Stomach (tissue), 19 donors: ENCODE measurements at regions of chr4 and their contacts with region 1.

Region 1: DNA sequence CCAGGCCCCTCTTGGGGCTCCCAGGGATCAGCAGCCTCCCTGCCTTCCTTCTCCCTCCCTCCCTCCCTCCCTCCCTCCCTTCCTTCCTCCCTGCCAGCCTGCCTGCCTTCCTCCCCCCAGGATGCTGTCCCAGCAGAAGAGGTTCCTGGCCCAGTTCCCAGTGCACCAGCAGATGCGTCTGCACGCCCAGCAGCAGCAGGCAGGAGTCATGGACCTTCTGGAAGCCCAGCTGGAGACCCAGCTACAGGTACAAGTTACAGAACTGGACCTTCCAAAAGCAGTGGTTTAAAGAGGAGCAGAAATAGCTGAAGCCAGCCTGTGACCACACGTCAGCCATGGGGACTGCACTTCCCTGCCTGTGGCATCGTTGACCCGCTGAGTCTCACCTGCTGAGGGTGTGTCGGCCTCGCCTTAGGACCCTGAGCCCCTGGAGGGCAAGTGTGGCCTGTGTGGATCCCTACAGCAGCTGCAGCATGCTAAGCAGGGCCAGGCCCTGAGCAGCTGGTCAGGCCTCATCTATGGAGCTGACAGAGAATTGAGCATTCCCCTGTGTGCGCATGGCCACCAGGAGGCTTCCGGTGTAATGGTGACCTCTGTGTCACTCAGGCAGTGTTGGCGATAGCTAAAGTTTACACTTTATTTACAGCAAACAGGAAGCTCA is 84.7 kb downstream of the CRMP1 start:
- DNase-seq: peak in 1 of 2 donors; percentile 38
- H3K4me3 ChIP-seq: no peak overlapping the region
- H3K27ac ChIP-seq: no peak overlapping the region
- H3K4me1 ChIP-seq: no peaks in the 10 kb centered on the region
- H3K27me3 ChIP-seq: no peaks in the 10 kb centered on the region
- CTCF ChIP-seq: no peak
- EP300 ChIP-seq: no peak
- POLR2A ChIP-seq: no peak

Region 2: DNA sequence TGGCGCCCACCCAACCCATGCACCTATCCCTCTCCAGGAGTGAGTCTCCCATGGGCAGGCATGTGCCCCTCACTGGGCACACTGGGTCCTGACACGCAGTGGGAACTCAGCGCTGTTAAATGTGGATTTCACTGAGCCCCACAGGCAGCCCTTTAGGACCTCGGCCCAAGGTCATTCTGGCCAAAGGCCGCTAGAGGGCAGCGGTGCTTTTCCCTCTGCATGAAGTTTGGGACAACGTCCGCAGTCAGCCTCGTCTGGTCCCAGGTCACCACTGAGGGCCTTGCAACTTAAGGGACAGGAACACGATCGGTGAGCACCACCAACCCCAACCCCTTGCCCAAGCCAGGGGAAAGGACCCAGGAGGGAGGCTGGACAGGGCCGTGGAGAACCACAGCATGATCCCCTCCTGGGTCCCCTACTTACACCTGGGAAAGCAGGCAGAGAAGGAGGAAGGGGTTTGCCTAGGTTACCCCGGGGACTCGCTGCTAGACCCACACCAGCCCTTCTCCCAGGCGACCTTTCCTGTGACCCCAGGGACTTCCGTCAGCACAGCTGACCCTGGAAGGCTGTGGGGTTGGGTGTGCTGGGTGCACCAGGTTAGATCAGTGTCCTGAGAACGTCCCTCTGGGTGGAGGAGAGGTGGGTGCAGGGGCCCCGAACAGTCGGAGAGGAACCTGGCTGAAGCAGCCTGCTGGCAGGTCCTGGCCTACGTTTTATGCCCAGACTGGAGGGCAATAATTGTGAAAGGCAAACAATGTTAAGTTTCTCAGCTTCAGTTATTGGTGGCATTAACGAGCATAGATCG is 812.9 kb before region 1 on chr4:
- intact Hi-C with region 1: loop called (anchors 10 kb)
- DNase-seq: peak; percentile 78 to 86
- H3K4me3 ChIP-seq: no peak overlapping the region
- H3K27ac ChIP-seq: peak overlapping the region in 1 of 5 donors; percentile 4
- H3K4me1 ChIP-seq: peaks cover 8 to 43% (median 29%) of the 10 kb centered on the region in 4 donors
- H3K27me3 ChIP-seq: peaks cover 0 to 9% (median 6%) of the 10 kb centered on the region in 3 donors
- CTCF ChIP-seq: peak in 6 of 7 experiments; percentile 43 to 86 (median 77)
- EP300 ChIP-seq: no peak
- POLR2A ChIP-seq: no peak

Region 3: DNA sequence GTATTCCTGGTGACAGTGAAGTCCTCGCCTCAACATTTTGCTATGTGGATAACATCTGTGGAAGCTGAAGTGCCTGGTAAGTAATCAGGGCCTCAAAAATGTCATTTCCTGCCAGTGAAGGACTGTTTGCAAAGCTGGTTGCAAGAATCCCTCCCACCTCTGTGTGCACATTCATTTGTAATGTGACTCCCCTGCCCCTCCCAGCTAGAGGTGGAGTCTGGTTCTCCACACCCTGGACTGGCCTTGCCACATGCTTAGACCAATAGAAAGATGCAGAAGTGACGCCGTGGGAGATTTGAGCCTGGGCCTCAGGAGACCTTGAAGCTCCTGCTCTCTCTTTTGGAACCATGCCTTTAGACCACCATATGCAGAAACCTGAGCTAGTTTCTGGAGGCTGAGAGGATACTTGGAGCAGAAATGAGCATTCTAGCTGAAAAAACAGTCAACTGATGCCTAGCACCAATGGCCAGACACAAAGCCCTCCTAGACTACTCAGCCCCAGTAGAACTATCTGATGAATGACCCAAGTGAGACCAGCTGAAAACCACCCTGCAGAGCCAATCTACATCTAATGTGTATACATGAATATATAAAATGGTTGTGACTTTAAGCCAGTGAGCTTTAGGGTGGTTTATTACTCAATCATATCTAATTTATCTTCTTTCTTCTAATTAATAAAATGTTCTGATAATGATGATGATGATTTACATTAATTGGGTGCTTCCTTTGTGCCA is 132.4 kb after region 1 on chr4:
- intact Hi-C with region 1: no loop called
- DNase-seq: peak in 1 of 2 donors; percentile 37
- H3K4me3 ChIP-seq: no peak overlapping the region
- H3K27ac ChIP-seq: no peak overlapping the region
- H3K4me1 ChIP-seq: no peaks in the 10 kb centered on the region
- H3K27me3 ChIP-seq: peaks cover 0 to 35% (median 0%) of the 10 kb centered on the region in 3 donors
- CTCF ChIP-seq: no peak
- EP300 ChIP-seq: no peak
- POLR2A ChIP-seq: no peak